A549 (cell line): ENCODE measurements at regions of chr9 and their contacts with region 1.

Region 1: DNA sequence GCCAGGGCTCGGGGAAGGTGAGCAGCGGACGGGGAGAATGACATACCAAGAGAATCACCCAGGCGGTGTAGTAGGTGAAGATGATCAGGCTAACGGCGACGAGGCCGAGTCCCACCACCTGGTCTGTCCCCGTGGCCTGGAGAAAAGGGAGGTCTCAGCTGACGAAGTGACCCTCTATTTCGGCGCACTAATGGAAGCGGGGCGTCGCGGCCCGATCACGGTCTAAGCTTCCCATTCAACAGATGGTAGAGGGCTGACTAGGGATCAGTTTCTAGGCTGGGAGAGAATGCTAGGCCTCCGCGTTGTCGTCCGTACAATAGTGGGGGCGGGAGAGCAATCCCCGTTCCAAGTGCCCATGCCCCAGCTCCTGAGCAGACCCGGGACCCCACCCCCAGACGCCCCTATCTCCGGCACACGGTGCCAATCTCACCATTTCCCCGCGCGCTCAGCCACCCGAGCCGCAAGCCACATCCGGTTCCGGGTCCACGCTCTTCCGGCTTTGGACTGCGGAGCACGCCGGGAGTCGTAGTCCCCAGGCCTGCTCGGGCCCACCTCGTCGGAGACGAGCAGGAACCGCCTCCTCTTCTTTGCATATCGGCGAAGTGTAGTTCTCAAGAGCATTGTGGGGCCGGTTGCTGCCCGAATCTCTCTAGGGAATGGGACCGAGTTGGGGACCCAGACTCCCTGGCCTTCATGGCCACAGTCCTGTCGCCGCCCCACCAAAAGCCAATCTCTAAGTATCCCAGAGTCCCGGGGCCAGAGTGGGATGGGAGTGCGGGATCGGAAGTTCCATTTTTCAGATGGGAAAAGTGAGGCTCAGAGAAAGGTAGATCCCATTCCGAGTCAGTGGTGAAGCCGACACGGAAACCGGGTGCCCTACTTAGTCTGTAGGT is at the start of gene DPM2:
- DNase-seq: peak; percentile 89 to 93
- ATAC-seq: peak; percentile 79 to 91
- H3K4me3 ChIP-seq: peak within 1 kb of the TSS; percentile 61
- H3K27ac ChIP-seq: peak within 1 kb of the TSS; percentile 80 to 92
- H3K4me1 ChIP-seq: peaks cover 34% of the 10 kb centered on the region
- CTCF ChIP-seq: no peak
- EP300 ChIP-seq: no peak
- POLR2A ChIP-seq: peak; percentile 44; the same call in 1 of the 2 replicates
- RAD21 ChIP-seq: no peak
- polyA plus RNA-seq, gene DPM2: 41.9 and 48.8 TPM in 2 replicates

Region 2: DNA sequence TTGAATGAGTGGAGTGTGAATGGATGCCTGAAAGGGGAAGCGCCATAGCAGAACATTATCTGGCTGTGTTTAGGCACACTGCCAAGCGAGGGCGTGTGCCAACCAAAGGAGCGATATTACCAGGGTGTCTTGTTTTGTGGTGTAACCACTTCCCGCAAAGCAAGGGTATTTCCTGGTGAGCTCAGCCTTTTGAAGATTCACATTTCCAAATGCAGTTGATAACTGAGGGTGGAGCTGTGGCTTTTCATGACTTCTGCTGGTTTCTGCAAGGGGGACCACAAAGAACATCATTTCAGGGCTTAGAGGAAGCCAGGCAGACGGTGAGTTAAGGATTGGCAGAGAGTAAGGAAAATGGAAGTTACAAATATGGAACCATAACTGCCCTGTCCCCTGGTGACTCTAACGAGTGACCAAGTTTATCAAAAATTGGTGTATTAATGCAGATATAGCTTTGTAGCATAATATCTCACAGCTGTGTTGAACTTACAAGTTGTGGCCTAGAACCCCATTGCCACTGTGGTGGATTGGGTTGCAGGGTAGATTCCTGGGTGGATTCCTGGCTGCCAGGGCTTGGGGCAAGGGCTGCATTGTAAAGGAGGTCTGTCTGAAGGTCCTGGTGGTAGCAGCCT is 951.6 kb before region 1 on chr9:
- CTCF ChIA-PET with region 1: no interaction called
- POLR2A ChIA-PET with region 1: no interaction called
- DNase-seq: peak; percentile 24 to 67
- ATAC-seq: peak; percentile 21 to 66; a peak in 4 of 6 replicates
- H3K4me3 ChIP-seq: no peak overlapping the region
- H3K27ac ChIP-seq: peak overlapping the region; percentile 54 to 58
- H3K4me1 ChIP-seq: peaks cover 31% of the 10 kb centered on the region
- CTCF ChIP-seq: no peak
- EP300 ChIP-seq: no peak
- POLR2A ChIP-seq: no peak
- RAD21 ChIP-seq: 0 out of 5 replicates have a peak, but pooled peaks of 1 of the 2 experiments have one; percentile 16

Region 3: DNA sequence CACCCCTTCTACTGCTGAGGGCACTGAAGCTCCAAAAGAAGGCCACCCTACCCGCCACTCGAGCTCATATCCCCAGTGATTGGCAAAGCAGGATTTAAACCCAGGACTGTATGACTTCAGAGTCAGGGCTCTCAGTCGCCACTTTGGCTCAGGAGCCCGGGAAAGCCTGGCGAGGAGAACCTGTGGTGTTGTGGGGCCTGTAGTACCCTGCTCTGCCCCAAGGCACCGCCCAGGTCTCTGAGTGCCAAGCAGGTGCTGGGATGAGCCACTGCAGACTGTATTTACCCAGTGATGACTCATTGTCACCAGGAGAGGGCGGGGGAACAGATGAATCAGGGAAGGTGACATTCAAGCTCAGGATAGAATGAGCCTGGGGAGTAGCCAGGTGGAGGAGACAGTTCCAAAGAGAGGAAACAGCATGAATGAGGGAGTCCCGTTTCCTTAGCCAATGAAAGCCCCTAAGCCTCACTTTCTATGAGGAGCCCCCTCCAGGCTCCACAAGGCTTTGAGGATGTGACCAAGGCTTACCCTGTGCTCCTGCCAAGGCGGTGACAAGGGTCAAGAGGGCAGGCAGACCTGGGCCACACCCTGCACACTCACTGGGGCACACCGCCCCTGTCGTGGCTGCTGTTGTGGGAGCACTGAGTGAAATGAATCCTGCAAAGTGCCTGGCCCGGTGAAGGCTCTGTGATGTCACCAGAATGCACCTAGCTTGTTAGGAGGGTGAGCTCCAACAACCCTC is 17.8 kb after region 1 on chr9:
- CTCF ChIA-PET with region 1: interaction called, 365 read pairs
- POLR2A ChIA-PET with region 1: no interaction called
- DNase-seq: peak; percentile 89 to 99
- ATAC-seq: peak; percentile 91 to 92
- H3K4me3 ChIP-seq: peak overlapping the region; percentile 12; the same call in 1 of the 3 replicates
- H3K27ac ChIP-seq: peak overlapping the region; percentile 75 to 84
- H3K4me1 ChIP-seq: peaks cover 61% of the 10 kb centered on the region
- CTCF ChIP-seq: 0 out of 3 replicates have a peak, but pooled peaks have one; percentile 15
- EP300 ChIP-seq: no peak; a peak in 1 of 5 replicates
- POLR2A ChIP-seq: no peak
- RAD21 ChIP-seq: peak; percentile 37 to 42; a peak in 2 of 5 replicates

Region 4: DNA sequence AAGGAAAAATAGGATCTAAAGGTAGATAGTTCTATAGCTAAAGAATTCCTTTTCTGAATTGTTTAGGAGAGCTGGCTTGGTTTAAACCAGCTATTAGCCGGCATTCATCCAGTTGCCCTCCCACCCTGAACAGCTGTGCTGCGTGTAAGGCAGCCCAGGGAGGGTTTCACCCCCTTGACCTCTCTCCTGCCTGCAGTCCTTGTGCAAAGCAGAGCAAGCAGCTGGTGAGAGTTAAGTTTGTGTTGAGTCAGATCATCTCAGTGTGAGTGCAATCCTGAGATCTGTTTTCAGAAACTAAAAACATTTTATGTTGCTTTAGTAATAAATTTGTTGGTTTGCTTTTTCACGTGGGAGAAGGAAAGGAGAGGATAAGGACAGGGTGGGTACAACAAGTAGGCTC is 143.4 kb after region 1 on chr9:
- CTCF ChIA-PET with region 1: interaction called, 26 read pairs
- POLR2A ChIA-PET with region 1: interaction called, 10 read pairs
- DNase-seq: no peak
- ATAC-seq: peak in 1 of 2 experiments; percentile 24; a peak in 2 of 6 replicates
- H3K4me3 ChIP-seq: no peak overlapping the region
- H3K27ac ChIP-seq: peak overlapping the region; percentile 80 to 88
- H3K4me1 ChIP-seq: peaks cover 55% of the 10 kb centered on the region
- CTCF ChIP-seq: no peak
- EP300 ChIP-seq: no peak
- POLR2A ChIP-seq: no peak
- RAD21 ChIP-seq: no peak